CD4-positive, alpha-beta memory T cell (primary cell): ENCODE measurements at regions of chr11 and their contacts with region 1.

Region 1: DNA sequence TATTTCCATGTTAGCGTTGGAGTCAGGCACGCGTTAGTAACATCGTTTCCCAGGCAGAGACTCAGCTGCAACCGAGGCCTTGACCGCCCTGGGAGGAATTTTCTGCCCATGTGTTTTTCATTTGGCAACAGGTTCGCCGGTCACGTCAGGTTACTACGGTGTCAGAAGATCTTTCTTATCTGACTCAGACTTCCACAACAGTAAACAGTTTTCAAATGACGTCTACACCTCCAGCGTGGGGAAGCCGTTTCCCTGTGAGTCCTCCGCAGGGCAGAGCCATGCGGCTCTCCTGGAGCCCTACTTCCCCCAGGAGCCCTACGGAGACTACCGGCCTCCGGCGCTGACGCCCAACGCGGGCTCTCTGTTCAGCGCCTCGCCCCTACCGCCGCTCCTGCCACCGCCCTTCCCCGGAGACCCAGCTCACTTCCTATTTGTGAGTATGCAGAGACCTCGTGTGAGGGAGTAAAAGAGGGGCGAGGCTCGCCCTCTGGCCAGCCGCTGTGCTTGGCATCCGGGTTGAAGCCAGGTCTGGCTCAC is 14.3 kb upstream of the POU2AF3 start:
- DNase-seq: no peak
- H3K4me3 ChIP-seq: no peak overlapping the region
- H3K4me3 Mint-ChIP-seq: no peak overlapping the region
- H3K27ac ChIP-seq: no peak overlapping the region
- H3K27ac Mint-ChIP-seq: peak overlapping the region in 2 of 7 donors; percentile 5 to 53
- H3K4me1 ChIP-seq: no peaks in the 10 kb centered on the region
- H3K4me1 Mint-ChIP-seq: no peaks in the 10 kb centered on the region
- H3K27me3 ChIP-seq: no peaks in the 10 kb centered on the region
- H3K27me3 Mint-ChIP-seq: peaks cover 0 to 1% of the 10 kb centered on the region in 2 donors

Region 2: DNA sequence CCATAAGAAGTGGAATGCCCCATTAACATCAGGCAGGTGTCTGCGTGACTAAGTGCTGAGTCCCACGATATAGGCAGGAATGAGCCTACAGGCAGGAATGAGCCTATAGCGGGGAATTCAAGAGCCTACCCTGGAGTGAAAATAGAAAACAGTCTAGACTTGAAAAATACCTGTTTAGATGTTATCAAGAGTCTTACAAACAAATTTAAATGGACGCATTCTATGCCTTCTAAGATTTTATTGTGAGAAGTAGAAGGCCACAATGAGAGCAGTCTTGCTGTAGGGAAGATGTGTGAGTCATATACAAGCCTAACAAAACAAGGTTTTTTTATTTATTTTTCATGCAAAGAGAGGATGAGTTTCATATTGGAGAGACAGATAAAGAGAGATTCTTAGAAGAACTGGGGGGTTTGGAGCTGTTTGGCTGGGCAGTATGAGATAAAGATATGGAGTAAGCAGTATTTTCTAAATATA is 1391.7 kb before region 1 on chr11:
- CTCF ChIA-PET with region 1: no interaction called
- POLR2A ChIA-PET with region 1: no interaction called
- intact Hi-C with region 1: no loop called
- DNase-seq: no peak
- H3K4me3 ChIP-seq: no peak overlapping the region
- H3K4me3 Mint-ChIP-seq: no peak overlapping the region
- H3K27ac ChIP-seq: no peak overlapping the region
- H3K27ac Mint-ChIP-seq: no peak overlapping the region
- H3K4me1 ChIP-seq: no peaks in the 10 kb centered on the region
- H3K4me1 Mint-ChIP-seq: no peaks in the 10 kb centered on the region
- H3K27me3 ChIP-seq: no peaks in the 10 kb centered on the region
- H3K27me3 Mint-ChIP-seq: no peaks in the 10 kb centered on the region

Region 3: DNA sequence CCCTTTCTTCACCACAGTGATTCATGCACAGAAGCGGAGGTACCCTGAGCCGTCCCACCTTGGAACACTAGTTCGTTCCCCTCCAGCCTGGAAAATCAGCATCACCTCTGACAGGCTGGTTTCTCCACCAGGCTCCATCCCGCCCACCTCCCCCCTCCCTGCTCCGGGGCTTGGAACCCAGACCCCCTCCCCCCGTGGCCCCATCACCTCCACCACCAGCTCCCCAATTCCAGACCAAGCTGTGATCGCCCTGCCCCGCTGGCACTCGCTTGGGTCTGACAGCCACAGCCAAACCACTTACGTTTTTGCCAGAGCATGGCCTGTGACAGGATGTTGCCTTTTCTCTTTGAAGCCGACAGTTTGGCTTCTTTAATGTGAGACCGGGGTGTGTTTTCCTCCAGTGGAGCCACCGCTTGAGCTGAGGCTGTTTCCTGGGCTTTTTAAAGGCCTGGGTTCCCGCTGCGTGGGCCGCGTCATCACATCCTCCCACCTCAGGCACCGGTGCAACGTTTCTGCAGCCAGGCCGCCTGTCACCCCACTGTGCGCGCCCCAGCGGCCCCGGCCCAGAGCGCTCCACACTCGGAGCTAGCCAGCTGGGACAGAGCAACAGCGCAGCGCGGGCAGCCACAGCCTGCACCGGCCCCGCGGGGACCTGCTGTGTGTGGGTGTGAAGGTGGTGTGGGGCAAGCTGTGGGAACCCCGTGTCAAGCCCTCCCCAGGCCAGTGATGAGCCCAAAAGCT is 95.0 kb after region 1 on chr11 and contains the start of gene POU2AF1:
- CTCF ChIA-PET with region 1: interaction called, 10 read pairs
- POLR2A ChIA-PET with region 1: interaction called, 4 read pairs
- intact Hi-C with region 1: no loop called
- DNase-seq: peak; percentile 69 to 79 (median 71)
- H3K4me3 ChIP-seq: peak within 1 kb of the TSS in 1 of 2 donors; percentile 46
- H3K4me3 Mint-ChIP-seq: peak within 1 kb of the TSS; percentile 77 to 91 (median 87)
- H3K27ac ChIP-seq: peak within 1 kb of the TSS; percentile 27
- H3K27ac Mint-ChIP-seq: peak within 1 kb of the TSS; percentile 86 to 99 (median 94)
- H3K4me1 ChIP-seq: peaks cover 24% of the 10 kb centered on the region
- H3K4me1 Mint-ChIP-seq: peaks cover 14 to 30% (median 24%) of the 10 kb centered on the region in 4 donors
- H3K27me3 ChIP-seq: no peaks in the 10 kb centered on the region
- H3K27me3 Mint-ChIP-seq: no peaks in the 10 kb centered on the region
- total RNA-seq, gene POU2AF1: 0.47 to 0.64 TPM

Region 4: DNA sequence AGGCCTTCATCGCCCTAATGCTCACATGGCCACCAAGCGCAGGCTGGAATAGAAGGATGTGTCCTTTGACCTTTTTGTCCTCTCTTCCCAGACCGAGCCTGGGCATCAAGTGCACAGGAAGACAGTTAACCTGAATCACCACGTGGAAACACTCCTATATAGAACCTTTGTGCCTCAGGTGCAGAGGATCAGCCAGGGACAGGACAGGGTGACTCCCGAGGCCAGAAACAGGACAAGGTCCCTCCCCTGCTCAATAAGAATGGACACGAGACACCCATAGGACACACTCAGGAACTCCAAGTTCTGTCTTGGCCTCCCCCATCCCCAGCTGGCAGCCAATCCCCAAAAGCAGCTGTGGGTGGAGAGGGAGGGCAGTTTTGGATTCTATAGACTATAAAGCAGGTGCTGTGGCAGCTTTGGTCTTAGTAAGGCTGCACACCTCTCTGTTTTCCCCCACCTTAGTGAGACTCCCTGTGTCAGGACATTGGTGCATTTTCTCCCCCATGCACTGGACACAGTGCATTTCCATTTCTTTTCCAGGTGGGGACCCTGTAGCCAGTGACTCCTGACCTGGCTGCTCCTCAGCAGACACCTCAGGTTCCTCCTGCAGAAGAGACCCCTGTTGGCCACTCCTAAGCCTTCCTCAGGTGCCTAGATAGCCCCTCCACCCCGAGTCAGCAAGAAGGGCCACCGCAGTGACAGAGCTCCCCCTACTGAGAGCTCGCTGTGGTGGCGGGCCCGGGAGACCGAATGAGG is 138.7 kb after region 1 on chr11:
- CTCF ChIA-PET with region 1: interaction called, 233 read pairs
- POLR2A ChIA-PET with region 1: no interaction called
- intact Hi-C with region 1: loop called (anchors 1 kb)
- DNase-seq: peak in 3 of 5 donors; percentile 13 to 14 (median 13)
- H3K4me3 ChIP-seq: no peak overlapping the region
- H3K4me3 Mint-ChIP-seq: peak overlapping the region in 1 of 8 donors; percentile 58
- H3K27ac ChIP-seq: no peak overlapping the region
- H3K27ac Mint-ChIP-seq: no peak overlapping the region
- H3K4me1 ChIP-seq: peaks cover 4% of the 10 kb centered on the region
- H3K4me1 Mint-ChIP-seq: peaks cover 2 to 7% (median 3%) of the 10 kb centered on the region in 4 donors
- H3K27me3 ChIP-seq: no peaks in the 10 kb centered on the region
- H3K27me3 Mint-ChIP-seq: peaks cover 0 to 4% of the 10 kb centered on the region in 2 donors

Region 5: DNA sequence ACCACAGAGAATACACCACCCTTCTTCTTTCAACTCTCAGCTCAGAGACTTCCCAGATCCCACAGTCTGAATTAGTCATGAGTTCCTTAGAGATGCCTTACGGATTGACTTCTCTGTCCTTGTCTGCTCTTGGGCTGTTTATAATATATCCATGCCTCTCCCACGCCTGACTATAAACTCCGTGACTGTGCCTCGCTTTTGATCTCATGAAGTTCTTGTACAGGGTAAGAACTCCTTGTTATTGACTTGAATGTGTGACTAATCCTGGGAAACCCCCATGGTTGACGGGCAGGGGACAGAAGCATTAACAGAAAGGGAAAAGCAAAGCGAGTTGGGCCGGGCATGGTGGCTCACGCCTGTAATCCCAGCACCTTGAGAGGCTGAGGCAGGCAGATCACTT is 157.4 kb after region 1 on chr11:
- CTCF ChIA-PET with region 1: interaction called, 136 read pairs
- POLR2A ChIA-PET with region 1: interaction called, 8 read pairs
- intact Hi-C with region 1: loop called (anchors 1 kb)
- DNase-seq: no peak
- H3K4me3 ChIP-seq: no peak overlapping the region
- H3K4me3 Mint-ChIP-seq: no peak overlapping the region
- H3K27ac ChIP-seq: no peak overlapping the region
- H3K27ac Mint-ChIP-seq: peak overlapping the region in 1 of 7 donors; percentile 14
- H3K4me1 ChIP-seq: peaks cover 19% of the 10 kb centered on the region
- H3K4me1 Mint-ChIP-seq: peaks cover 15 to 24% (median 20%) of the 10 kb centered on the region in 4 donors
- H3K27me3 ChIP-seq: no peaks in the 10 kb centered on the region
- H3K27me3 Mint-ChIP-seq: peaks cover 0 to 1% of the 10 kb centered on the region in 2 donors